ENCODE measurements at regions of chr3 and their contacts with region 1.

Region 1: GRCh38 chr3:190513409-190514162 is at the start of gene IL1RAP:
- DNase-seq: peak; percentile 97
- H3K4me3 ChIP-seq: peak within 1 kb of the TSS; percentile 89 to 96 (median 93)
- H3K27ac ChIP-seq: peak within 1 kb of the TSS; percentile 88
- H3K4me1 ChIP-seq: peaks cover 31% of the 10 kb centered on the region
- H3K27me3 ChIP-seq: no peaks in the 10 kb centered on the region
- CTCF ChIP-seq: peak; percentile 39 to 42
- total RNA-seq, gene IL1RAP: 94.2 to 111 TPM

Region 2: DNA sequence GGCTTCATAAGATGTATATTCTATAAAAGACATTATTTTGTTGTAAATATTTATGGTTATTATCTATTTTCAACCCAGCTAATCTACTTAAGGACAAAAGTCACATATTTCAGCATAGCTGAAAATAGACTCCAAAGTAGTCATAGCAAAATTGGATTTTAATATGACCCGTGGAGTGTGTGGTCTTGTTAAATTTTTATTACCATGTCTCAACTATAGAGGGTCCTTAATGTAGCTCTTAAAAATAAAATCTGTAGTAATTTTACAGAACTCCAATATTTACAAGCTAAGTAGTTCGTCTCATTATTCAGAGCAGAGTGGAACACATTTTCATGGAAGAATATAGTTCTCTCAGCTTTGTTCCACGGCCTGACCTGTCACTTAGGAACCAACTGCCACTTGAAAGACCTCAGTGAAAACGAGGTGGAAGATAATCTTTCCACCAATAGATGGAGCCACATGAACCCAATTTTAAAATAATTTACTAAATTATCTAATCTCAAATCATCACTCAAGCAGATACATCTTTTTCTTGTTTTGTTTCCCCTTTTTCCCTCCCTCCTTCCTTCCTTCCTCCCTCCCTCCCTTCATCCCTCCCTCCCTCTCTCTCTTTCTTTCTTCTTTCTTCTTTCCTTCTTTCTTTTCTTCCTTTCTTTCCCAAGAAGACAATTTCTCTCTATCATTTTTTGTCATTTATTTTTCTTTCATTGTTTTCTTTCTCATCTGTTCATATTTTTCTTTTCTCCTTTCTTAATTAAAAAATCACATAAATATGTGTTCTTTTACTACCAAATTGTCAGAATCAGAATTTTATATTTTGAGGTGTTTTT is 288.5 kb before region 1 on chr3:
- CTCF ChIA-PET with region 1: no interaction called
- dilution Hi-C with region 1: no loop called
- in situ Hi-C with region 1: no loop called
- intact Hi-C with region 1: loop called (anchors 5 kb)
- DNase-seq: peak; percentile 48
- H3K4me3 ChIP-seq: no peak overlapping the region
- H3K27ac ChIP-seq: no peak overlapping the region
- H3K4me1 ChIP-seq: peaks cover 5% of the 10 kb centered on the region
- H3K27me3 ChIP-seq: no peaks in the 10 kb centered on the region
- CTCF ChIP-seq: peak; percentile 53 to 59

Region 3: GRCh38 chr3:190430906-190431305 is 82.7 kb before region 1 on chr3:
- CTCF ChIA-PET with region 1: no interaction called
- dilution Hi-C with region 1: no loop called
- in situ Hi-C with region 1: no loop called
- intact Hi-C with region 1: no loop called
- DNase-seq: no peak
- H3K4me3 ChIP-seq: no peak overlapping the region
- H3K27ac ChIP-seq: no peak overlapping the region
- H3K4me1 ChIP-seq: peaks cover 28% of the 10 kb centered on the region
- H3K27me3 ChIP-seq: no peaks in the 10 kb centered on the region
- CTCF ChIP-seq: no peak

Region 4: GRCh38 chr3:190443257-190443656 is 70.3 kb before region 1 on chr3:
- CTCF ChIA-PET with region 1: no interaction called
- dilution Hi-C with region 1: no loop called
- in situ Hi-C with region 1: no loop called
- intact Hi-C with region 1: loop called (anchors 5 kb)
- DNase-seq: no peak
- H3K4me3 ChIP-seq: no peak overlapping the region
- H3K27ac ChIP-seq: no peak overlapping the region
- H3K4me1 ChIP-seq: no peaks in the 10 kb centered on the region
- H3K27me3 ChIP-seq: no peaks in the 10 kb centered on the region
- CTCF ChIP-seq: peak; percentile 26 to 45

Region 5: DNA sequence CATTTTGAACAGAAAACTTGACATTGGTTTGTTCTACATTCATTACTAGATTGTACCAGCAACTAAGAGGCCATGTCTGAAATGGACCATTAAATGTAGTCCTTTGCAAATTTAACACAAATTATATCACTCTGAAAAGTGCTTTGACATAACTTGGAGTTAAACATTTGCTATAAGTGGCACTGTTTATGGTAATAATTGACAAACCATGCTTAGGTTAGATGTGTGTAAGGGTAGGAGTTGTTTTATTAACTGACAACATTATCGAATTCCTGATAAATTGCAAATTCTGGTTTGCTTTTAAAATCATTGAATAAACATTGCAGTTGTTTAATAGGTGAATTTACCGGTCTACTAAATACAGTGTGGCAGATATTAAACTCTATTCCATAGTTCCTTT is 57.8 kb before region 1 on chr3:
- CTCF ChIA-PET with region 1: no interaction called
- dilution Hi-C with region 1: no loop called
- in situ Hi-C with region 1: no loop called
- intact Hi-C with region 1: no loop called
- DNase-seq: no peak
- H3K4me3 ChIP-seq: no peak overlapping the region
- H3K27ac ChIP-seq: no peak overlapping the region
- H3K4me1 ChIP-seq: peaks cover 4% of the 10 kb centered on the region
- H3K27me3 ChIP-seq: no peaks in the 10 kb centered on the region
- CTCF ChIP-seq: no peak

Region 6: GRCh38 chr3:190543671-190544070 is 30.1 kb after region 1 on chr3:
- CTCF ChIA-PET with region 1: no interaction called
- dilution Hi-C with region 1: no loop called
- in situ Hi-C with region 1: no loop called
- intact Hi-C with region 1: loop called (anchors 1 kb)
- DNase-seq: peak; percentile 82
- H3K4me3 ChIP-seq: no peak overlapping the region
- H3K27ac ChIP-seq: peak overlapping the region; percentile 64
- H3K4me1 ChIP-seq: peaks cover 15% of the 10 kb centered on the region
- H3K27me3 ChIP-seq: no peaks in the 10 kb centered on the region
- CTCF ChIP-seq: no peak

Region 7: DNA sequence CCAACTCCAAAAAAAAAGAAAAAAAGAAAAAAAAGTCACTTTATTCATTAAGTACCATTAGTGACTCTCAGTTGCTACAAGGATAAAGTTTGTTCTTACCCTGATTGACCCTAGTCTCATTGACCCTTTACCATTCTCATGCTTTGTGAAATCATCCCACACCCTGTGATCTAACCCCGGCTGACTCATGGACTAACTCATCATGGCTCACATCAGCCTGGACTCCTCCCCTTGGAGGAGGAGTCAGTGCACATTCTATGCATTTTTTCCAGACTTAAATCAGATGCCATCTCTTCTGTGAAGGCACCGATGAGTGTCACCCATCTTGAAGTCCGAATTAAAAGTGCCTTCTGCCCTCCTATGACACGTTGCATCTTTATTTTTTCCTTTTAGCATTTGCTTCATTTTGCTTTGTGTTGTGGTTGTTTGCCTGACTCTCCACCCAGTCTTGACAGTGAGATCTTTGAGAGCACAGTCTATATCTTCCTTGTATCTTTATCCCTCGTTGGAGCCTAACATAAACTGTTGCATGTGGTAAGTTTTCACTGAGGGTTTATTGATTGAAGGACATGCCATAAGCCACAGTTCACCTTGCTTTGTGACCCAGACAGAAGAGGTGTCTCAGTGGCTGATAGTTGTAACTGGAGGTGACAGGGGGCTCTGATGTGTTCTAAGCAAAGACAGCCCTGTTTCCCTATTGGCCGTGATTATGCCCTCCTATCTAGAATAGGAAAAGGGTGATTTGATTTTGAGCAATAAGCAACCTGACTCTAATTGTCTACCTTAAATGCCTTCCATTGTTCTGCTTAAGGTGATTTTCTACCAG is 72.4 kb after region 1 on chr3:
- CTCF ChIA-PET with region 1: no interaction called
- dilution Hi-C with region 1: no loop called
- in situ Hi-C with region 1: no loop called
- intact Hi-C with region 1: loop called (anchors 1 kb)
- DNase-seq: peak; percentile 96
- H3K4me3 ChIP-seq: peak overlapping the region in 2 of 3 experiments; percentile 3 to 28
- H3K27ac ChIP-seq: peak overlapping the region; percentile 94
- H3K4me1 ChIP-seq: peaks cover 28% of the 10 kb centered on the region
- H3K27me3 ChIP-seq: no peaks in the 10 kb centered on the region
- CTCF ChIP-seq: no peak

Region 8: DNA sequence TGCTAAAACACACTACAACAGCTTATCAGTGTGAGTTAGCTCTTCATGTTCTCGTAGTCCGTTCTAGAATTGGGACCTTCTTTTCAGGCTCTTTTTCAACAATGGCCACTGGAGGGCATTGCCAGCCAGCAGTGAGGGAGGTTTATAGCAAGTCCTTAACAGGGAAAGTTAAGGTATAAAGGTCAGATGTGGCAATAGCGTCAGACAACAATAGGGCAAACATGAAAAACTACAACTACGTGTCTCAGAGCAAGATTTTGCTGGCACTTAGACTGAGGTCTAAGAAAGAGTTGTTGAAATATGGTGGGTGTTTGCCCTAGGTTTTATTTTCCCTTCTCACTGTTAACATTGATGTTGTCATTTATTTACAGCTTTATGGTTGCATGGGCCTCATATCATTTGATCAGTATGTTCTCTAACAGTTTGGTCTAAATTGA is 187.5 kb after region 1 on chr3:
- CTCF ChIA-PET with region 1: interaction called, 4 read pairs
- dilution Hi-C with region 1: no loop called
- in situ Hi-C with region 1: no loop called
- intact Hi-C with region 1: loop called (anchors 1 kb)
- DNase-seq: peak; percentile 67
- H3K4me3 ChIP-seq: no peak overlapping the region
- H3K27ac ChIP-seq: no peak overlapping the region
- H3K4me1 ChIP-seq: peaks cover 8% of the 10 kb centered on the region
- H3K27me3 ChIP-seq: no peaks in the 10 kb centered on the region
- CTCF ChIP-seq: peak; percentile 72 to 85